ENCODE measurements at regions of chr20 and their contacts with region 1.

Region 1: DNA sequence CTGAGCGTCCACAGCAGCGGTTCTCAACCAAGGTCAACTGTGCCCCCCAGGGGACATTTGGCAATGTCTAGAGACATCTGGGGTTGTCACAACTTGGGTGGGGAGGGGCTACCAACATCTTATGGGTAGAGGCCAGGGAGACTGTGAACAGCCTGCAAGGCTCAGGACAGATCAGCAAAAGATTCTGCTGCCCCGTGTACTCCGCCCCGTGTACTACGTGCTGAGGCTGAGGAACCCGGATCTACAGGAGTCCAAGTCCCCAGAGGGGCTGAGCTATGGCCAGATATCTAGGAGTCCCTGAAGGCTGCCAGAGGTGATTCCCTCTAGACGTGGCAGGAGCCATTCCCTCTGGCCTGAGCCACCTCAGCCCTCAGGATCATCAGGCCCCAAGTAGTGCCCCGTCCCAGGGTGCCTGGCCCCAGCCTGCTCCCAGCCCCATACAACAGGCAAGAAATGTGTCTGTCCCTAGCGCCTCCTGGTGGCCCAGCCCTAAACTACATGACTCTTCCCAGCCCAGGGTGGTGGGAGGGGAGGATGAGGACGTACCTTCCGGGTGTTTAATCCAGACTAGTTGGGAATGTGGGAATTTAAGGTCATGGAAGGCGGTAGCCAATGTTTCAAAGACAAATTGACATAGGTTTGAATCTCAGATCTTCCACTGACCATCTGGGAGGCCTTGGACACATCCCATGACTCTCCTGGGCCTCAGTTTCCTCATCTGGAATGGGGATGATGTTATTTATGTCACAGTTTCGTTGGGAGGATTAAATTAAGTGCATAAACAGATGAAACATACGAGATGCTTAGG is 49.5 kb upstream of the PTPN1 start:
- DNase-seq: peak; percentile 95
- H3K4me3 ChIP-seq: no peak overlapping the region
- H3K27ac ChIP-seq: peak overlapping the region; percentile 35 to 70 (median 43)
- H3K4me1 ChIP-seq: peaks cover 0 to 22% (median 14%) of the 10 kb centered on the region in 4 donors
- H3K27me3 ChIP-seq: no peaks in the 10 kb centered on the region
- CTCF ChIP-seq: peak; percentile 90 to 98 (median 97)
- EP300 ChIP-seq: no peak
- POLR2A ChIP-seq: no peak

Region 2: DNA sequence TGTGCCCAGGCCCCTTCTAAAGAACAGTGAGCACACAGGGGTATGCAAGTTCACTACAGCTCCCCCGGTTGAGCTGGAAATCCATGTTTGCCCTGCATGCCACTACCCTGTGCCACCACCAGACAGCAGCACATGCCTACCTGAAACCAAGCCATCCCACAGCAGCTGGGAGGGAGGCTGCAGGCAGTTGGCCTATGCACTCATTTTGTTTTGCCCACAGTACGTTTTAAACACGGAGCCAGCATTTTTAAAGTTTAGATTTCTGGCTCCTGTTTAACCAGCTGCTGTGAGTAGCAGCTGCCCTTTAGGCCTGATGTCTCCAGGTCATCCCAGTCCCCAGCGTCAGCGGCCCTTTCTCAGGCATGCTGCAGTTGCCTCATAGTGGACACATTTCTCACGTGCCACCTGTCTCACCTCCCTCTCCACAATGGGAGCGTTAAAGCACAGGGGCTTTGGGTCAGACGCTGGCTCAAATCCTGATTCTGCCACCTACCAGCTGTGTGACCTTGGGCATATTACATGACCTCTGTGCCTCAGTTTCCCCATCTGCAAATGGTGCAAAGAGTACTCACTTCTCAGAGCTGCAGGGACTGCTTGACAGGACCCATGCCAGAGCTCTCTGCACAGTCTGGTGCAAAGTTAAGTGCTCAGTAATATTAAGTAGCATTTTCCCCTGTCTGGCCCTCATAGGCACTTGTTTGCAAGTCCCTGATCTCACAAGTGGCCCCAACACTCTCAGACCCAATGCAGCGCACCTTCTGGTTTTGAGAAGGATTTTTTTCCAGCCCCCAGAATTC is 339.6 kb before region 1 on chr20:
- intact Hi-C with region 1: loop called (anchors 10 kb)
- DNase-seq: peak; percentile 85
- H3K4me3 ChIP-seq: no peak overlapping the region
- H3K27ac ChIP-seq: peak overlapping the region in 3 of 4 donors; percentile 45 to 54 (median 54)
- H3K4me1 ChIP-seq: peaks cover 0 to 15% (median 7%) of the 10 kb centered on the region in 4 donors
- H3K27me3 ChIP-seq: no peaks in the 10 kb centered on the region
- CTCF ChIP-seq: peak; percentile 86 to 95 (median 91)
- EP300 ChIP-seq: no peak
- POLR2A ChIP-seq: no peak

Region 3: GRCh38 chr20:50346372-50347283 is 114.0 kb before region 1 on chr20:
- intact Hi-C with region 1: no loop called
- DNase-seq: peak; percentile 97
- H3K4me3 ChIP-seq: peak overlapping the region in 3 of 4 donors; percentile 5 to 24 (median 17)
- H3K27ac ChIP-seq: peak overlapping the region; percentile 51 to 83 (median 68)
- H3K4me1 ChIP-seq: peaks cover 0 to 18% (median 16%) of the 10 kb centered on the region in 4 donors
- H3K27me3 ChIP-seq: no peaks in the 10 kb centered on the region
- CTCF ChIP-seq: no peak
- EP300 ChIP-seq: peak in 1 of 4 donors; percentile 3
- POLR2A ChIP-seq: no peak

Region 4: GRCh38 chr20:50967586-50967985 is 506.9 kb after region 1 on chr20:
- intact Hi-C with region 1: no loop called
- DNase-seq: no peak
- H3K4me3 ChIP-seq: no peak overlapping the region
- H3K27ac ChIP-seq: no peak overlapping the region
- H3K4me1 ChIP-seq: no peaks in the 10 kb centered on the region
- H3K27me3 ChIP-seq: no peaks in the 10 kb centered on the region
- CTCF ChIP-seq: no peak
- EP300 ChIP-seq: no peak
- POLR2A ChIP-seq: no peak

Measured in sigmoid colon (tissue), 7 donors.